Heart right ventricle (tissue), 16 donors: ENCODE measurements at regions of chr9 and their contacts with region 1.

Region 1: GRCh38 chr9:72193478-72193881 is 44.2 kb downstream of the GDA start:
- DNase-seq: no peak
- ATAC-seq: no peak
- H3K4me3 ChIP-seq: no peak overlapping the region
- H3K27ac ChIP-seq: no peak overlapping the region
- H3K4me1 ChIP-seq: no peaks in the 10 kb centered on the region
- H3K27me3 ChIP-seq: peaks cover 0 to 4% (median 0%) of the 10 kb centered on the region in 7 donors
- CTCF ChIP-seq: no peak

Region 2: DNA sequence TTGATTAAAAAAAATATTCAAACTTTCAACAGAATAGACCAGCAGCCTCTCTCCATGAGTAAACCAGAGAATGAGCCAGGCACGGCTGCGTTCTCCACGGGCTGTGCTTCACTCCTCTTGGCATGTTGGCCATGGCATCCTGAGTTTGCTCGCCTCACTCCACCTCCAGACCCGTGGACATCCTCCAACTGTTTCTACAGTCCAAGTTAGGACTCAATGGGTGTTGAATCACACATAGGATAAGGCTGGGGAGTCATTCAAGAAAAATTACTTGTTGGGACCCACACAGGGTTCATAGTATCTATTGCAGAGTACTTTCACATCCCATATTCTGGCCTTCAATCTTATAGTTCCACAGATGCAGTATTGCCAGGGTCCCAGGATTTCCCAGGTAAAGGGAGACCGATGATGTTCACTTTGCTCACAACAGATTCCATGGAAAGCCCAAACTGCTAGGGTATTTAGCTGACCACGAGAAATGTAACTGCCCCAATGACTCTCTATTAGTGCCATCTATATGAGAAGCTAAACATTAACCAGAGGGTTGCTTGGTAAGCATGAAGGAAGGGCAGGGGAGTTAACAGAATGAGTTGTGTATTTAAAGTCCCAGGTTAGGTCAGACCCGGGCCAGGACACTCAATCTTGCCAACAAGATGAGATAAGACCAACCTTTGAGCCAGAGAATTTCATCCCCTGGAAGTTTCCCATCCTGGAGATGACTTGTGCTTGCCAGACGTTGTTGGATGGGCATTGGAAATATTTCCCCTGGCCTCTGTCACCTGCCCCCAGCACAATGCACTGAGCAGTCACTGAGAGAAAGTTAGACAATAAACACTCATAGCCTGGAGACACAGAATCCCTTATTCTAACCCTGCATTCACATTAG is 64.0 kb before region 1 on chr9:
- intact Hi-C with region 1: loop called in 1 of 10 experiments (anchors 10 kb)
- DNase-seq: no peak
- ATAC-seq: peak in 1 of 8 donors; percentile 55
- H3K4me3 ChIP-seq: no peak overlapping the region
- H3K27ac ChIP-seq: peak overlapping the region in 1 of 10 donors; percentile 1
- H3K4me1 ChIP-seq: no peaks in the 10 kb centered on the region
- H3K27me3 ChIP-seq: no peaks in the 10 kb centered on the region
- CTCF ChIP-seq: no peak

Region 3: GRCh38 chr9:72383978-72384709 is 190.7 kb after region 1 on chr9:
- intact Hi-C with region 1: no loop called
- DNase-seq: no peak
- ATAC-seq: no peak
- H3K4me3 ChIP-seq: no peak overlapping the region
- H3K27ac ChIP-seq: no peak overlapping the region
- H3K4me1 ChIP-seq: no peaks in the 10 kb centered on the region
- H3K27me3 ChIP-seq: no peaks in the 10 kb centered on the region
- CTCF ChIP-seq: no peak